Posterior vena cava (tissue), 2 donors: ENCODE measurements at regions of chr1 and their contacts with region 1.

Region 1: DNA sequence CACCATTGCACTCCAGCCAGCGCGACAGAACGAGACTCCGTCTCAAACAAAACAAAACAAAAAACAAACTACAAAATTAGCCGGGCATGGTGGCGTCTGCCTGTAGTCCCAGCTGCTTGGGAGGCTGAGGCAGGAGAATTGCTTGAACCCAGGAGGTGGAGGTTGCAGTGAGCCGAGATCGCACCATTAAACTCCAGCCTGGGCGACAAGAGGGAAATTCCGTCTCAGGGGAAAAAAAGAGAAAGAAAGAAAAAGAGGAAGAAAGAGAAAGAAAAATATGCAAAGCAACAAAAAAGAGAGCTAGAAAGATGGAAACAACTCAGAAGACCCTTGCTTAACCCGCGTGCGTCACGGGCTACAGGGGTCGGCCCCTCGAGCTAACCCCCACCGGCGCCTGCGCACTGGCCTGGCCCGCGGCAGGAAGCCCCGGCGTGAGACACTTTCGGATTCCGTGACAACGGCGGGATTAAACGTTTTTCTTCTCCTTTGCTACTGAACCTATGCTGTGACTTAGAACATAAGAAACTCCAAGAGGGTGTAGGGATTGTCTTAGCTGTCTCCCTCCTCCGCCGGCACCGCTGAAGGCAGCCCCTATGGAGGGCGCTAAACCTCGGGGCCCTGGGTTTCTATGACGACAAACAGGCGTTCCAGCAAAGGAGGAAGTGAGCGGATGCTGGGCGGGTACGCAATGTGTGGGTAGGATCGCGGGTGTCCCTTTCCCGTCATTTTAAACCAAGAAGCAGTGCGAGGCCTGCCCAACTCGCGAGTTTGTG is at the start of gene AXDND1:
- DNase-seq: peak; percentile 98
- total RNA-seq, gene AXDND1: not detected

Region 2: GRCh38 chr1:179081687-179082332 is 283.7 kb before region 1 on chr1 and contains the start of gene TOR3A:
- intact Hi-C with region 1: loop called (anchors 5 kb)
- DNase-seq: peak; percentile 97
- total RNA-seq, gene TOR3A: 13.0 to 18.3 TPM

Region 3: DNA sequence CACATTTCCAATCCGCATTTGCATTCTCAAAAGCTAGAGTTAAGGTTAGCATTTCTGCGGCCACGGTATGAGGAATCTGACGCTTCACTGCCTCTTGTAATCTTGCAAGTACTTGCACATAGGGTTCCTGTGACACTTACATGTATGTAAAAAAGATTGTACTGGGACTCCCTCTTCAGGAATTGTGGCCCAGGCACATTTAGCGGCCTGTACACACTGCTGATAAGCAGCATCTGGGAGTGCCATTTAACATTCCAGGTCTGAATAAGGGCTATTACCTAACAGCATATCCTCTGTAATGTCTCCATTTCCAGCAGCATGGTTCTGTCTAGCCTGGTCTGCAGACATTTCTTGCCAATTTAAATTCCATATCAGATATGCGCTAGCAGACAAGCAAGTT is 76.0 kb after region 1 on chr1:
- intact Hi-C with region 1: no loop called
- DNase-seq: no peak